Activated naive CD4-positive, alpha-beta T cell treated with anti-CD3 and anti-CD28 coated beads, Interleukin-2, amount 10 ng/mL, durations not matched to agents 7 days and 5 days (primary cell): ENCODE measurements at regions of chr7 and their contacts with region 1.

Region 1: DNA sequence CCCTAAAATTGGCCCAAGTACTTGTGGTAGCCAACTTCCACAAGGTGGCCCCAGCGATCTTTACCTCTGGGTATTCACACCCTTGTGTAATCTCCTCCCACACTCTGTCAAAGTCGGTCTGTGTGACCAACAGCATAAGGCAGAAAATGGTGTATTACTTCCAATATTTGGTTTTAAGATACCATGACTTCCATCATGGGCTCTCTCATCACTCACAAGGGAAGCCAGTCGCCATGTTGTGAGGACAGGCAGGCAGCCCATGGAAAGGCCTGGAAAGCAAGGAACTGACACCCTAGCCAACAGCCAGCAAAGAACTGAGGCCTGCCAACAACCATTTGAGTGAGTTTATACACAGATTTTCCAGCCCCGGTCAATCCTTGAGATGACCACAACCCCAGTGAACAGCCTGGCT is 91.0 kb upstream of the KMT2E start:
- DNase-seq: peak; percentile 83
- H3K4me3 Mint-ChIP-seq: no peak overlapping the region
- H3K27ac Mint-ChIP-seq: no peak overlapping the region
- H3K4me1 Mint-ChIP-seq: peaks cover 4% of the 10 kb centered on the region
- H3K27me3 Mint-ChIP-seq: peaks cover 2% of the 10 kb centered on the region

Region 2: DNA sequence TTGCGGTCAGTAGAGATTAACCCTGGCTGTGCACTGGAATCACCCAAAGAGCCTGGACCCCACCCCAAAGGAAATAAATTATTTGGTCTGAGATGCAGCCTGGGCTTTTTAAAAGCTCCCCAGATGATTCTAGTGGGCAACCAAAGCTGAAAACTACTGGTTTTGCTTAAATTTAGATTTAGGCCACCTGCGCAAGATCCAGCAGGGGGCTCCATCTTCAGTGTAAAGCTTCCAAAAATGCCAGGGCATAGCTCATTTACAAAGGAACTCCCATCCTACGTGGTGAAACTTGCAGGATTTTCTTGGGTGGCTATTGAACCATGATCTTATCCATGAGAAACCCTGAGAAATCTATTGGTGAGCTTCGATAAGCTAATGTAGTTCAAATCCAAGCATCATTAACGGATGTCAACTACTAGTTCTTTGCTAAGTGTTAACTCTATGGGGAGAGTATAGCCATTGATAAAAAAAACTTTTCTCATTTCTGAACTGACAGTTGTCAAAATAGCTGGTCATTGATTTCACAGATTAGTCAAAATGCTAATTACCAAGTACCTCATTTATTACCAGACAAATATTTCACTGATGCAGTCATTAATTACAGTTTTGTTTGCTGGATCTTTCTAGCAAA is 279.3 kb before region 1 on chr7:
- CTCF ChIA-PET with region 1: interaction called, 15 read pairs
- DNase-seq: peak; percentile 21
- H3K4me3 Mint-ChIP-seq: no peak overlapping the region
- H3K27ac Mint-ChIP-seq: no peak overlapping the region
- H3K4me1 Mint-ChIP-seq: no peaks in the 10 kb centered on the region
- H3K27me3 Mint-ChIP-seq: no peaks in the 10 kb centered on the region

Region 3: GRCh38 chr7:104956753-104957450 is 33.9 kb after region 1 on chr7:
- CTCF ChIA-PET with region 1: no interaction called
- DNase-seq: peak; percentile 32
- H3K4me3 Mint-ChIP-seq: no peak overlapping the region
- H3K27ac Mint-ChIP-seq: peak overlapping the region; percentile 86
- H3K4me1 Mint-ChIP-seq: peaks cover 25% of the 10 kb centered on the region
- H3K27me3 Mint-ChIP-seq: no peaks in the 10 kb centered on the region